Posterior vena cava (tissue), 2 donors: ENCODE measurements at regions of chr10 and their contacts with region 1.

Region 1: GRCh38 chr10:125048101-125048864 is 106.4 kb downstream of the ZRANB1 start:
- DNase-seq: peak; percentile 95

Region 2: DNA sequence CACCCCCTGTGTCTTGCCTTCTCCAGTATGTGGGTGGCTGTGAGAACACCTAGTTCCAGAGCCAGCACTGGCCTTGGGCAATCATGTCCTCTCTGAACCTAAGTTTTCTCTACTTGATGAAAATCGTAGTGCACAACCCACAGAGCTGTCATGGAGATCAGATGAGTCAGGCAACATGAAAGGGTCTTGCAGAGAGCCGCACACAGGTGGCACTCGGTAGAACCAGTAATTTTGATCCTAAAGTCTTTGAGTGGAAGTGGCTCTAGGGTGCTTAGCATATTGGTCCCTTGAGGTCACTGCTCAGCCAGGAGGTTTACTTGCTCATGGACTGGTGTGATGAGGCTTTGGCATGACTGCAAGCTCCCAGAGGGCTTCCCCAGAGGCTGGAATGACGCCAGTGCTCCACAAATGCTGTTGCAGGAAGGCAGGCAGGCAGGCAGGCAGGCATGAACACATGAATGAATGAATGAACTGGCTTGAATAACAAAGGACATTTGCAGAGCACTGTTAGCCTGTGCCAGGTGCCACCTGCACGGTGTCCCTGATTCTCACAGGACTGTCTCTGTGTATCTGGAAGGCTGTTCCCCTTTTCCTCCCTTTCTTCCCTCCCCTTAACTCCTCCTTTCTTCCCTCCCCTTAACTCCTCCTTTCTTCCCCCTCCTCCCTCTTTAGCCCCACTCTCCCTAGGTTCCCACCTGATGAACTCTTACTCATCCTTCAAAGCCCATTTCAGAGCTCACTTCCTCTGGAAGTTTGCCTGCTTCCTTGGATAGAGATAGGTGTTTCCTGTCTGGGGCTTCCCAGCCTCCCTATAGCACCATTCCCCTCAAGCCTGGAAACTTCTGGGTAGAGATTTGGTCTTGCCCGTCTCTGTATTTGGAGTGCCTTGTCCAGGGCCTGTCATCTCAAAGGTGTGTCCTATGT is 139.2 kb after region 1 on chr10:
- intact Hi-C with region 1: no loop called
- DNase-seq: no peak

Region 3: GRCh38 chr10:125343118-125343925 is 295.0 kb after region 1 on chr10:
- intact Hi-C with region 1: loop called in 1 of 2 experiments (anchors 10 kb)
- DNase-seq: no peak